ENCODE measurements at regions of chrX and their contacts with region 1.

Region 1: DNA sequence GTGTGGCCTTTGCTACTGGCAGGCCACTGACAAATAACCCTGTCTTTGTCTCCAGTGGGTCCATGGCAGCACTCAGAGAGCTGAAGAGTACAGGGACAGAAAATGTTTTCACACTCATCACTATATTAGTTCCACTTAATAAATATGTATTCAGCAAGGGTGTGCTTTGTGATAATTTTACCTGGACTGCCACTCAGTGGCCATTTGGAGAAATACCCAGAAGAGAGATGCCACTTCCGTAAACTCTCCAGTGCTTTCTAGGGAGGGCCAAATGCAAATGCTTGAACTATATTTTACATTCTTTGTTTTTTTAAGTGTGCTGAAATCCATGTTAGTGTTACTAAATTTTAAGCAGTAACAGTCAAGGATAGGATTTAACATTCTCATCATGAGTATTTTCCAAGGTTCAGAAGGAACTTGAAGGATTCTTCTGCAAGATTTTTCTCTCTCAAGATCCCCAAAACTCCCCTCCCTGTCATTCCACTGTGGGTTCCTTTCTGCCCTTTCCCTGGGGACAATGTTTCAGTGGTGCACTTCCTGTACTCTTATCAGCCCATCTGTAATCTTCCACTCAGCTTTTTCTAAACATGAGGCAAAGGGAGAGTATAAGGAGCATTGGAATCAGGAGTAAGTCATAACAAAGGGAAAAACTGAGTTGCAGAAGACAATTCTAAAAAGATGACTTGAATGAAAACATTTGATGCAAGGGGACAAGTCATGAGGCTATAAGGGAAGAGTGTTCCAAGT is 46.0 kb downstream of the TFDP3 start:
- DNase-seq: peak in 1 of 4 experiments; percentile 9
- ATAC-seq: peak; percentile 65; the same call in 2 of the 3 replicates
- H3K4me3 ChIP-seq: no peak overlapping the region
- H3K27ac ChIP-seq: no peak overlapping the region
- H3K4me1 ChIP-seq: no peaks in the 10 kb centered on the region
- H3K27me3 ChIP-seq: no peaks in the 10 kb centered on the region
- CTCF ChIP-seq: peak; percentile 23 to 53 (median 26); a peak in 3 of 6 replicates
- EP300 ChIP-seq: no peak
- POLR2A ChIP-seq: no peak
- RAD21 ChIP-seq: peak in 1 of 2 experiments; percentile 44; a peak in 2 of 4 replicates

Region 2: DNA sequence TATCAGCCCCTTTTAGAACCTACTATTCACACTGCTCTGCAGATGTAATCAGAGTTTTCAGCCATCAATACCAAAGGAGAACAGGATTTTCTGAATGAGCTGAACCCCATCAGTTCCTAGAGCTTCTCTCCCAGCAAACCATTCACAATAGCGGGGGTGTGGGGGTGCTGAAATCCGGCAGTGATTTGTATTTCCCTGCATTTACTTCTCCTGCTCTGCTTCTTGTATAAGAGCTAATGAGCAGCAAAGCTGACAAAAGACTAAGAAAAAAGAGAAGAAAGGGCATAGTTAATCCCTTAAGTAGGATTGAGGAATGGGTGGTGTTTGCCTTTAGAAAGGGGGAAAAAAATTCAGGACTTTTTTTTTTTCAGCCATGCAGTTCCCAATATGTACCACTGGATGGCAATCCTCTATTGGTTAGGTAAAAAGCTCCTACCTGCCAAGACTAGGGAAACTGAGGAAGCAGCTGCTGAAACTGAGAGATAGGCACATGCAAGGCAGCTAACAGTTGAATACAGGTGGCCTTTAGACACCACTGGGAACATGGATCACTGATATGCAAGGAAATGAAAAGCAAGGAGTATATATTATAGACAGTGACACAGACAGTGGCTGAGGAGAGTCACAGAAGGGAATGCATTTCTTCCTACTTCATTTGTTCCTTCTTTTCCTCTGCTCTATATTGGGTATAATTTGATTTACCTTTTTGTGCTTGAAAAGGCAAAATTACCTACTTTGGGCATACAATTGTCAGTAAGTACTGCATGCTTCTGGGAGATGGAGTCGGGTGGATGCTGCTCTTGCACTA is 431.6 kb before region 1 on chrX:
- CTCF ChIA-PET with region 1: no interaction called
- POLR2A ChIA-PET with region 1: no interaction called
- in situ Hi-C with region 1: no loop called
- intact Hi-C with region 1: loop called (anchors 5 kb)
- DNase-seq: peak in 2 of 4 experiments; percentile 19 to 27
- ATAC-seq: no peak
- H3K4me3 ChIP-seq: no peak overlapping the region
- H3K27ac ChIP-seq: no peak overlapping the region
- H3K4me1 ChIP-seq: no peaks in the 10 kb centered on the region
- H3K27me3 ChIP-seq: no peaks in the 10 kb centered on the region
- CTCF ChIP-seq: peak; percentile 45 to 54 (median 50)
- EP300 ChIP-seq: no peak
- POLR2A ChIP-seq: no peak
- RAD21 ChIP-seq: peak; percentile 14 to 46; a peak in 2 of 4 replicates

Region 3: GRCh38 chrX:132968296-132968949 is 203.7 kb before region 1 on chrX:
- CTCF ChIA-PET with region 1: no interaction called
- POLR2A ChIA-PET with region 1: no interaction called
- in situ Hi-C with region 1: no loop called
- intact Hi-C with region 1: loop called (anchors 10 kb)
- DNase-seq: no peak
- ATAC-seq: no peak
- H3K4me3 ChIP-seq: no peak overlapping the region
- H3K27ac ChIP-seq: no peak overlapping the region
- H3K4me1 ChIP-seq: no peaks in the 10 kb centered on the region
- H3K27me3 ChIP-seq: no peaks in the 10 kb centered on the region
- CTCF ChIP-seq: no peak
- EP300 ChIP-seq: no peak
- POLR2A ChIP-seq: no peak
- RAD21 ChIP-seq: no peak

Measured in K562 (cell line).